Endothelial cell of umbilical vein (primary cell): ENCODE measurements at regions of chr5 and their contacts with region 1.

Region 1: GRCh38 chr5:140639148-140639979 is at the start of gene TMCO6:
- DNase-seq: peak; percentile 96
- H3K4me3 ChIP-seq: peak within 1 kb of the TSS; percentile 37 to 54 (median 40)
- H3K27ac ChIP-seq: peak within 1 kb of the TSS; percentile 41
- H3K4me1 ChIP-seq: peaks cover 11% of the 10 kb centered on the region
- H3K27me3 ChIP-seq: no peaks in the 10 kb centered on the region
- CTCF ChIP-seq: peak; percentile 31 to 74
- POLR2A ChIP-seq: peak; percentile 89
- total RNA-seq, gene TMCO6: 14.2 and 23.7 TPM in 2 replicates

Region 2: GRCh38 chr5:140481758-140482157 is 157.6 kb before region 1 on chr5:
- CTCF ChIA-PET with region 1: interaction called, 3 read pairs
- POLR2A ChIA-PET with region 1: no interaction called
- dilution Hi-C with region 1: no loop called
- intact Hi-C with region 1: loop called (anchors 5 kb)
- DNase-seq: no peak
- H3K4me3 ChIP-seq: no peak overlapping the region
- H3K27ac ChIP-seq: no peak overlapping the region
- H3K4me1 ChIP-seq: peaks cover 26% of the 10 kb centered on the region
- H3K27me3 ChIP-seq: no peaks in the 10 kb centered on the region
- CTCF ChIP-seq: no peak
- POLR2A ChIP-seq: no peak

Region 3: DNA sequence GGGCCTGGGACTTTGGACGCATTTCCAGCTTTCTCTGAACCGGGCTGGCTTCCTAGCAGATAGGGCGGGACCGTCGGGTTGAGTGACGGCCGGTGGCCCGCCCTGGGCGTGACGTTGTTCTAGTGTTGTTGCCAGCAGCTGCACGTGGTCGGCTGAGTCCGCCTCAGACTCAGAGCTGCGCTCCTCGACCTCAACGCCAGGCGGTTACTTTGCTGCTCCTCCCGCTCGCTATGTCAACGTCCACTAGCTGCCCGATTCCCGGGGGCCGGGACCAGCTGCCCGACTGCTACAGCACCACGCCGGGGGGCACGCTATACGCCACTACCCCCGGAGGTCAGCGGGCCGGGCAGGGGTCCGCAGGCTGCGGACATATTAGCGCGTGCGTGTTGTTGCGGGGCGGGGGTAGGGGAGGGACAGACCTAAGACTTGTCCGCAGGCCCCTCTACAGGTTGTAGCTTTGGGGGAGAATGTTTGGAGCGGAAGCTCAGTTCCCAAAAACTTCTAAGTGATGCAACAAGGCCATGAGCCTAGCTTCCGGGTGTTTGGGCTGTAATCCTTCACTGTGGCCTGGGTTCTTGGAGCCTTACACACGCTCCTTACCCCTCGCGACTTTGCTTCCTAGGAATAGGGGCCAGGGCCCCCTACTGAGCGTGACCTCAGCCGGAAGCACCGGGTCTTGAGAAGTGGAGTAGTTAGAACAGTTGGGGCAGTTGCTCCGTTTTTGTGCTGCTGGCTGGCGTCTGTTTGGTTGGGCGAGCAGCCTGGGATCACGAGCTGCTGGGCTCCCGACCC is 91.7 kb before region 1 on chr5 and contains the start of gene EIF4EBP3:
- CTCF ChIA-PET with region 1: interaction called, 50 read pairs
- POLR2A ChIA-PET with region 1: interaction called, 5 read pairs
- dilution Hi-C with region 1: no loop called
- intact Hi-C with region 1: loop called (anchors 1 kb)
- DNase-seq: peak; percentile 98
- H3K4me3 ChIP-seq: peak within 1 kb of the TSS in 1 of 3 experiments; percentile 20
- H3K27ac ChIP-seq: no peak within 1 kb of the TSS
- H3K4me1 ChIP-seq: peaks cover 24% of the 10 kb centered on the region
- H3K27me3 ChIP-seq: no peaks in the 10 kb centered on the region
- CTCF ChIP-seq: peak; percentile 45 to 69
- POLR2A ChIP-seq: no peak
- total RNA-seq, gene EIF4EBP3: 7.6 and 8.8 TPM in 2 replicates

Region 4: GRCh38 chr5:140557136-140557805 is 82.1 kb before region 1 on chr5 and contains the start of gene SRA1:
- CTCF ChIA-PET with region 1: interaction called, 13 read pairs
- POLR2A ChIA-PET with region 1: no interaction called
- dilution Hi-C with region 1: no loop called
- intact Hi-C with region 1: loop called (anchors 2 kb)
- DNase-seq: peak; percentile 92
- H3K4me3 ChIP-seq: peak within 1 kb of the TSS; percentile 54 to 92 (median 83)
- H3K27ac ChIP-seq: peak within 1 kb of the TSS; percentile 79
- H3K4me1 ChIP-seq: peaks cover 15% of the 10 kb centered on the region
- H3K27me3 ChIP-seq: no peaks in the 10 kb centered on the region
- CTCF ChIP-seq: no peak
- POLR2A ChIP-seq: peak; percentile 99
- total RNA-seq, gene SRA1: 19.7 and 29.7 TPM in 2 replicates

Region 5: GRCh38 chr5:140564196-140565023 is 75.0 kb before region 1 on chr5 and contains the starts of genes APBB3 and SLC35A4:
- CTCF ChIA-PET with region 1: interaction called, 22 read pairs
- POLR2A ChIA-PET with region 1: no interaction called
- dilution Hi-C with region 1: no loop called
- intact Hi-C with region 1: loop called (anchors 1 kb)
- DNase-seq: peak; percentile 97
- H3K4me3 ChIP-seq: peak within 1 kb of the TSS; percentile 49 to 84 (median 73)
- H3K27ac ChIP-seq: peak within 1 kb of the TSS; percentile 65
- H3K4me1 ChIP-seq: peaks cover 8% of the 10 kb centered on the region
- H3K27me3 ChIP-seq: no peaks in the 10 kb centered on the region
- CTCF ChIP-seq: no peak
- POLR2A ChIP-seq: peak; percentile 83
- total RNA-seq, gene APBB3: 12.1 and 13.3 TPM in 2 replicates
- total RNA-seq, gene SLC35A4: 60.9 and 65.6 TPM in 2 replicates

Region 6: DNA sequence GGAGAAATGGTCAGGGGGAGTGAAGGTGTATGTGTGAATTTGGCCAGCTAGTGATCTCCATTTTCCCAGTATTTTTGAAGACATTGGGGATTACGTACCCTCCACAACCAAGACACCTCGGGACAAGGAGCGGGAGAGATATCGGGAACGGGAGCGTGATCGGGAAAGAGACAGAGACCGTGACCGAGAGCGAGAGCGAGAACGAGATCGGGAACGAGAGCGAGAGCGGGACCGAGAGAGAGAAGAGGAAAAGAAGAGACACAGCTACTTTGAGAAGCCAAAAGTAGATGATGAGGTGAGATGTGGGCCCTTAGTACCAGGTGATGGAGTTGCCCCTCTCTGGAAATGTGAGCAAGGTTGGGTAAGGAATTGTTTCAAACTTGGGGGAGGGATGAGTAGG is 19.5 kb after region 1 on chr5:
- CTCF ChIA-PET with region 1: no interaction called
- POLR2A ChIA-PET with region 1: no interaction called
- dilution Hi-C with region 1: no loop called
- intact Hi-C with region 1: no loop called
- DNase-seq: no peak
- H3K4me3 ChIP-seq: no peak overlapping the region
- H3K27ac ChIP-seq: no peak overlapping the region
- H3K4me1 ChIP-seq: no peaks in the 10 kb centered on the region
- H3K27me3 ChIP-seq: no peaks in the 10 kb centered on the region
- CTCF ChIP-seq: no peak
- POLR2A ChIP-seq: no peak

Region 7: DNA sequence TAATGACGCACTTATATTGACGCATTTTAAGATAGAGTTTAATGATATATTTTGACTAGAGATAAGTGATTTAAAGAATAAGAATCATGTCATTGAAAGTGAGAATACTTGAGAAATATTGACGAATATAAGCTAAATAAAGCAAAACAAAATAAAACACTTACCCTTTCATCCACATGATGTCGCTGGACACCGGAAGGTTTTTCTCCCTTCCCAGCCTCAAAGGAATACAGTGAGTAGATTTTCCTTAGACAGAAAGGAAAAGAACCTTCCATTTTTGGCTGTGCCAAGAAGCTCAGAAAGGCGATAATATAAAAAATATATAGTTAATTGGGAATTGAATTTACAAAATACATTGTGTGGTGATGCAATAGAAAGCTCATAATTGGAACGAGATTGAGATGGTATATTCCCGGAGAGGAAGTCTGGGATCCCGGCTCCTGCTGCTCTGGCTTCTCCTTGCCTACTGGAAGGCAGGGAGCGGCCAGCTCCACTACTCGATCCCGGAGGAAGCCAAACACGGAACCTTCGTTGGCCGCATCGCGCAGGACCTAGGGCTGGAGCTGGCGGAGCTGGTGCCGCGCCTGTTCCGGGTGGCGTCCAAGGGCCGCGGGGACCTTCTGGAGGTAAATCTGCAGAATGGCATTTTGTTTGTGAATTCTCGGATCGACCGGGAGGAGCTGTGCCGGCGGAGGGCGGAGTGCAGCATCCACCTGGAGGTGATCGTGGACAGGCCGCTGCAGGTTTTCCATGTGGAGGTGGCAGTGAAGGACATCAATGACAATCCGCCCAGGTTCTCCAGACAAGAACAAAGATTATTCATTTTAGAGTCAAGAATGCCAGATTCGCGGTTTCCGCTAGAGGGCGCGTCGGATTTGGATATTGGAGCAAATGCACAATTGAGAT is 182.3 kb after region 1 on chr5 and contains the start of gene PCDHA5:
- CTCF ChIA-PET with region 1: no interaction called
- POLR2A ChIA-PET with region 1: no interaction called
- dilution Hi-C with region 1: no loop called
- intact Hi-C with region 1: no loop called
- DNase-seq: peak; percentile 38
- H3K4me3 ChIP-seq: no peak within 1 kb of the TSS
- H3K27ac ChIP-seq: no peak within 1 kb of the TSS
- H3K4me1 ChIP-seq: no peaks in the 10 kb centered on the region
- H3K27me3 ChIP-seq: no peaks in the 10 kb centered on the region
- CTCF ChIP-seq: peak; percentile 49 to 59
- POLR2A ChIP-seq: no peak
- total RNA-seq, gene PCDHA5: not detected in 2 replicates